ENCODE measurements at regions of chr11 and their contacts with region 1.

Region 1: DNA sequence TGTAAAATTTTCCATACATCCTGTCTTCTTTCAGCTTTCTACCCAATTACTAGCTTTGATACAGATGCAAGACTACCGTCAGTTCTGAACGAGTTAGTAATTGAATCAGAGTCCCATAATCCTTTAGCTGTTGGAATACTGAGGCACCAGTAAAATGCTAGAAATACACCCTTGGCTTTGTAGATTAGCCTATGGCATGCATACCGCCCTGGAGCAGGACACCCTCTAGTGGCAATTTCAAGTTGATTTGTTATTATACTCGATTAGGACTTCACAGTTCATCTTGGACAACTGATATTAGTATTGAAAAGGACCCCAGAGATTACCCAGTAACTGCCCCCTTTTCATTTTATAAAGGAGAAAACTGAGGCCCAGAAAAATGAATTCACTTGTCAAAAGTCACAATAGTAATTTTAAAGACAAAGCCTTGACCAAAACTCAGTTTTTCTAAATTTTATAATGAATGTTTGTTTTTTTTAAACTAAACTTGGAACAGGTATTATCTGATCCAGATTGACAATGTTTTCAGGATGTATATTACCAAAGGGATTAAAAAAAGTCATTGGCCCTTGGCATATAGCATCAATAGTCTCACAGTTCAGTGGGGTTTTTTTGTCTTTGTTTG is 72.6 kb downstream of the HIPK3 start:
- DNase-seq: peak in 1 of 2 donors; percentile 45
- ATAC-seq: peak; percentile 57 to 80 (median 74)
- H3K4me3 ChIP-seq: no peak overlapping the region
- H3K27ac ChIP-seq: peak overlapping the region in 3 of 10 donors; percentile 14 to 50 (median 16)
- H3K4me1 ChIP-seq: peaks cover 4 to 99% (median 74%) of the 10 kb centered on the region in 9 donors
- H3K27me3 ChIP-seq: no peaks in the 10 kb centered on the region
- CTCF ChIP-seq: peak; percentile 29 to 79 (median 66)

Region 2: GRCh38 chr11:33094157-33094556 is 235.7 kb before region 1 on chr11:
- intact Hi-C with region 1: no loop called
- DNase-seq: no peak
- ATAC-seq: no peak
- H3K4me3 ChIP-seq: no peak overlapping the region
- H3K27ac ChIP-seq: no peak overlapping the region
- H3K4me1 ChIP-seq: no peaks in the 10 kb centered on the region
- H3K27me3 ChIP-seq: no peaks in the 10 kb centered on the region
- CTCF ChIP-seq: no peak

Region 3: DNA sequence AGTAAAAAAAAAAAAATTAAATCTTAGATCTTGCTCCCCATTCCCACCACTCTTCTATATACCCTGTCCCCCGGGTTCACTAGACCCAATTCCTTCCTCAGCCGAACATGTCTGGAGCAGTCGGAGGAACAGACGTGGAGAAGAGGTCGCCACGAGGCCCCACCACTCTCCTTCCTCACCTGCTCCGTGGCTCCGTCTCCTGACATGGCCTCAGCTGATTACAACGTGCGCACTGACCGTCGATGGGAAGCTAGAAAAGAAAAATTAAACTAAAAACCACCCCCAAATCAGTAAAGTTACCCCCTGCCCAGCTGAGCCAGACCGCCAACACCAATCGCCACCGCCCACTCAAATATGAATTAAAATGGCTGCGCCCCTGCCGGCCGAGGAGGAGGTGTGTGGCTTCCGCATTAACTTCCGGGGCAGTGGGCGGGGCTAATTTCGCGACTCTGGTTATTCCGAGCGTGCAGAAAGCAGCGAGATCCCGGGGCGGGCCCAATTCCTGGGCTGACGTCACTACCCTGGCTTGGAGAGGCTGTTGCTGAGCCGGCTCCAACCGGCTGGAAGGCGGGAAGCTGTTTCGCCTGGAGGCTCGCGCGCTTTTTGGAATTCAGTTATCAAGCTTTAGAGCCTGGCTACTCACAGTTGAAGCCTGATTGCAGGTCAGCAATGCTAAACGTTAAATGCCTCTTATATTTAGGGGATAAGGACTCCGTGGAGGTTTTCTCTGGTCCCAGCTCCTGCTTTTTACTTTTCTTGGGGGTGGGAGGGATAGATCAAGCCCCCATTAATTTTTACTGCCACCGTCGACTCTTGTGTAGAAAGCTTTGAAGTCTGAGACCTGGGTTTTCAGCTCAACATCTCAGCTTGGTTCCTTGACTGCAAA is 168.5 kb before region 1 on chr11 and contains the start of gene CSTF3:
- intact Hi-C with region 1: loop called in 7 of 10 experiments (anchors 2 to 10 kb)
- DNase-seq: peak; percentile 100
- ATAC-seq: peak; percentile 98 to 100 (median 100)
- H3K4me3 ChIP-seq: peak within 1 kb of the TSS; percentile 42 to 83 (median 74)
- H3K27ac ChIP-seq: peak within 1 kb of the TSS in 9 of 10 donors; percentile 34 to 89 (median 78)
- H3K4me1 ChIP-seq: peaks cover 0 to 48% (median 36%) of the 10 kb centered on the region in 9 donors
- H3K27me3 ChIP-seq: no peaks in the 10 kb centered on the region
- CTCF ChIP-seq: peak; percentile 48 to 71 (median 62)
- total RNA-seq, gene CSTF3: 8.6 to 16.0 (median 12.7) TPM

Region 4: DNA sequence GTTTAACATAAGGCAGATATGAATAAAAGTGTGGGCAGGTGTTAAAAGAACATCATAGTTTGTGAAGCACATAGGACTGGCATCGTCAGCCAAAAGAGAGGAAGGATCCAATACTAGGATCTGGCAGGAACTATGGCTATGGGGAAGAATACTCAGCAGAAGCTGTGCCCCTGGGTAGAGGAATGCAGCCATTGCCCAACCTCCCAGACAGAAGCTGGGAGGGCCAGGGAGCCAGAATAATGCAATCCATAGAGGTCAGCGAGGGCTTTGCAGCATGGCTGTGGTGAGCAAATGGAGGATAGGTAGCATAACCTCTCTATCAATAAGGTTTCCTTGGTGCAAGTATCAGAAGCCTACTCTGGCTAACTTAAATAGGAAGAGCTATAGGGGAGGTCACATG is 156.8 kb before region 1 on chr11:
- intact Hi-C with region 1: loop called in 8 of 10 experiments (anchors 2 to 10 kb)
- DNase-seq: no peak
- ATAC-seq: peak in 3 of 8 donors; percentile 40 to 89 (median 47)
- H3K4me3 ChIP-seq: no peak overlapping the region
- H3K27ac ChIP-seq: no peak overlapping the region
- H3K4me1 ChIP-seq: peaks cover 0 to 9% (median 3%) of the 10 kb centered on the region in 9 donors
- H3K27me3 ChIP-seq: no peaks in the 10 kb centered on the region
- CTCF ChIP-seq: no peak

Region 5: DNA sequence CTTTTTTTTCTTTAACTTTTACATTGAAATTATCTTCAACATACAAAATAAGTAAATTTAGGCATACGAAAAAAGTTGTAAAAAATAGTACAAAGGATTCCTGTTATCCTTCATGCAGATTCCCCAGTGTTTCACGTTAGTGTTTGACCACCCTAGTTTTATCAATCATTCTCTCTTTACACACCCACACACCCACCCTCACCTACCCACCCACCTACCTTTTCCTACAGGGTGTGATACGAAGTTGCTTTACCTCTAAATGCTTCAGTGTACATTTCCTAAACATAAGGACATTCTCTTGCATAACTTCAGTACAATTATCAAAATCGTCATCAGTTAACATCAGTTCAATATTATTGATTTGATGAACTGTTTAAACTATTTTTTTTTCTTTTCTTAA is 35.6 kb before region 1 on chr11:
- intact Hi-C with region 1: loop called in 1 of 10 experiments (anchors 1 kb)
- DNase-seq: no peak
- ATAC-seq: no peak
- H3K4me3 ChIP-seq: no peak overlapping the region
- H3K27ac ChIP-seq: peak overlapping the region in 4 of 10 donors; percentile 2 to 86 (median 18)
- H3K4me1 ChIP-seq: peaks cover 10 to 72% (median 60%) of the 10 kb centered on the region in 9 donors
- H3K27me3 ChIP-seq: no peaks in the 10 kb centered on the region
- CTCF ChIP-seq: no peak